ENCODE measurements at regions of chr2 and their contacts with region 1.

Region 1: DNA sequence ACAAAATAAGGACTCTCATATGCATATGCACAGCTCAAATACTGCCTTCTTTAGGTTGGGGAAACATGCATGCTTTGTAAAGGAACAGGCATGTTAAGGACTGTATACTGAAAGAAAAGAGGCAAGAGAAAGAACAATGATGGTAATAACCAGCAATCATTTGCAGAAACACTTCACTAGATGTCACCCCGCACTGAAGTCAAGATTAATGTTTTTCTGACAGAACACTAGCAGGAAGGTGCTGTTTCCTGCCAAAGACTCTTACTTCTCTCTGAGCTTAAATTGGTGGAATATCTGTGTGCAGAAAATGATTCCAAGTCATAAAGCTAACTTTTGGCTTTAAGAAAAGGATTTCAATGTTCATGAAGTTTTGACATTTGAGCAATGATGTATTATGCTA is 19.3 kb upstream of the CSRNP3 start:
- DNase-seq: no peak
- ATAC-seq: peak in 2 of 8 donors; percentile 53 to 55
- H3K4me3 ChIP-seq: no peak overlapping the region
- H3K27ac ChIP-seq: no peak overlapping the region
- H3K4me1 ChIP-seq: no peaks in the 10 kb centered on the region
- H3K27me3 ChIP-seq: no peaks in the 10 kb centered on the region
- CTCF ChIP-seq: peak in 5 of 9 donors; percentile 7 to 41 (median 27)

Region 2: DNA sequence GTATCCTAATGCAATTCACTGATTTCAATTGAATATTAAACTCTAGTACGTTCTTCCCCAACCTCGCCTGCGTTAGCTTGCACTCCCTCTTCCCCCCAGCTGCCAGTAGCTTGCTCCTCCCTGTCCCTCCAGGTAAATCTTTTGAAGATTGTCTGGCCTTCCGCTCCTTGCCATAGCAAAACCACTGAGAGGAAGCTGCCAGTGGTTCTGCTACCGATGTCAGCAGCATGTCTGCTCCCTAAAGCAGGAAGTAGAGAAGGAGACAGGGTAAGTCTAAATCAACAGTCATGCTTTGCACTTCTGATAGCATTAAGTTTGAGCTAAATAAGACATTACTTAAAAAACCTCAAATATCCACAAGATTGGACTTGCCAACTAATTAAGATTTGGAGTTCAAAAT is 121.9 kb before region 1 on chr2:
- intact Hi-C with region 1: loop called in 1 of 10 experiments (anchors 2 kb)
- DNase-seq: no peak
- ATAC-seq: no peak
- H3K4me3 ChIP-seq: no peak overlapping the region
- H3K27ac ChIP-seq: no peak overlapping the region
- H3K4me1 ChIP-seq: no peaks in the 10 kb centered on the region
- H3K27me3 ChIP-seq: no peaks in the 10 kb centered on the region
- CTCF ChIP-seq: no peak

Region 3: DNA sequence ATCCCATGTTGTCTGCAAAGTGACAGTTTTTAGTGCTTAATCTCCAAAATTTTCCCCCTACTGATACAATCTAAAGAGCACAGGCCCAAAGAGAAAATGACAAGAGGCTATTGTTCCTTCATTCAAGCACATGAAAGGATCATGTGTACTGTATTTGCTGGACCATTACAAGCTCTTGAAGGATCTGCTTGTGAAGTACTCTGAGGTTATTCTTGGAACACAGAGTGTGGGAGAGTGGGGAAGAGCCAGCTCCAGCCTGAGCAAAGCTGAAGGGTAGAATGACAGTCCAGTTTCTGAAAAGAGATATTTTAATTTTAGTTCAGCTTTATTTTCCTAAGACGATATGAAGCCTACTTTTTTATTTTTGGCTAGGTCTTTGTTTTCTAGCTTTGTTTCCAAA is 231.7 kb after region 1 on chr2:
- intact Hi-C with region 1: loop called in 1 of 10 experiments (anchors 10 kb)
- DNase-seq: peak in 1 of 2 donors; percentile 39
- ATAC-seq: peak; percentile 90 to 98 (median 96)
- H3K4me3 ChIP-seq: no peak overlapping the region
- H3K27ac ChIP-seq: peak overlapping the region in 9 of 10 donors; percentile 24 to 80 (median 58)
- H3K4me1 ChIP-seq: peaks cover 0 to 27% (median 8%) of the 10 kb centered on the region in 9 donors
- H3K27me3 ChIP-seq: no peaks in the 10 kb centered on the region
- CTCF ChIP-seq: no peak

Region 4: DNA sequence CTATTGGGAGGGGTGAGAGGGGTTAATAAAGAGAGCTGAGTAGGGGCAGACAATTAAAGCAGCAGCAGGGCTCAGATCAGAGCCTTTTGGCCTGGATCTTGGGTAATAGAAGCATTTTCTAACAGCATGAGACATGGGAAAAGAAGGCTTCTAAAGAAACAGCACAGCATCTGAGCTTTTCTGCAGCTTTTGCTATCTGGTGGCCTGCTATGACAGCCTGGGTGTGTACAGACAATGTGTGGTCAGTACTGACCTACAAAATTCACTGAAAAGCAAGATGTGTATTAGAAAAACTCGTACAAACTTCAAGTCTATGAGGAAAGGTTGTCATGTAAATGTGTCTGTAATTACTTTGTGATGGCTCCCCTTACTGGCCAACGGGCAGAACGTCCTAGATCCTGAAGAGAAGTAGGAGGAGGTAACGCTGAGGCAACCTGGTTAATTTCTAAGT is 248.3 kb after region 1 on chr2:
- intact Hi-C with region 1: loop called in 2 of 10 experiments (anchors 2 to 5 kb)
- DNase-seq: peak in 1 of 2 donors; percentile 24
- ATAC-seq: peak in 7 of 8 donors; percentile 56 to 81 (median 69)
- H3K4me3 ChIP-seq: no peak overlapping the region
- H3K27ac ChIP-seq: no peak overlapping the region
- H3K4me1 ChIP-seq: peaks cover 0 to 5% (median 0%) of the 10 kb centered on the region in 9 donors
- H3K27me3 ChIP-seq: no peaks in the 10 kb centered on the region
- CTCF ChIP-seq: peak in 8 of 9 donors; percentile 28 to 64 (median 44)

Region 5: DNA sequence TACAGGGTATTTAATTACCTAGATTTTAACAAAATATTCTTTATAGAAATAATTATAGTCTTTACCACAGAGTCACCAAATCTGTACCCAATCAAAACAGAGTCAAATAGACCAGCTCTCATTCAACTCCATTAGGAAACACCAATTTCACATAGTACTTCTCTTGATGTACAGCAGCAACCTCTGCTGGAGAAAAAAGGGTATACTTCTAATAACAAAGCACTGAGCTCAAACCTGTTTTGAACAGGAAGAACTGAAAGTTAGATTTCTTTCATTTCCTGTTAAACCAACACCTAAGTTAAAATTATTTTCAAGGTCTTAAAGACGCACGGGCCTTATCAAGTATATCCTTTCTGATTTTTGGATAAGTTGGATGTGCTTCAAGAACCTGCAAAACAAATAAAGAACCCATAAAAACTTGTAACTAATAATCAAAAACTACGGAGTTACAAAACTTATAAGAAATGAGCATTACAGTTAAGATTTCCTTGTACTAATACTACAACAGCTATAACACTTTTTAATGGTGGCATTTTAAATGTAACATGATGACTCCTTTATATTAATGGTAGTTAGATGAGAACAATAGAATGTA is 424.4 kb after region 1 on chr2:
- intact Hi-C with region 1: loop called in 1 of 10 experiments (anchors 5 kb)
- DNase-seq: no peak
- ATAC-seq: peak in 6 of 8 donors; percentile 37 to 71 (median 48)
- H3K4me3 ChIP-seq: no peak overlapping the region
- H3K27ac ChIP-seq: no peak overlapping the region
- H3K4me1 ChIP-seq: peaks cover 0 to 18% (median 0%) of the 10 kb centered on the region in 9 donors
- H3K27me3 ChIP-seq: no peaks in the 10 kb centered on the region
- CTCF ChIP-seq: peak; percentile 23 to 80 (median 70)